Activated naive CD4-positive, alpha-beta T cell treated with anti-CD3 and anti-CD28 coated beads for 36 hours (primary cell): ENCODE measurements at regions of chr2 and their contacts with region 1.

Region 1: GRCh38 chr2:207311316-207312005 is 145.7 kb upstream of the KLF7 start:
- DNase-seq: peak; percentile 78
- H3K4me3 Mint-ChIP-seq: peak overlapping the region; percentile 13
- H3K27ac Mint-ChIP-seq: peak overlapping the region; percentile 78
- H3K4me1 Mint-ChIP-seq: peaks cover 22% of the 10 kb centered on the region
- H3K27me3 Mint-ChIP-seq: peaks cover 4% of the 10 kb centered on the region

Region 2: DNA sequence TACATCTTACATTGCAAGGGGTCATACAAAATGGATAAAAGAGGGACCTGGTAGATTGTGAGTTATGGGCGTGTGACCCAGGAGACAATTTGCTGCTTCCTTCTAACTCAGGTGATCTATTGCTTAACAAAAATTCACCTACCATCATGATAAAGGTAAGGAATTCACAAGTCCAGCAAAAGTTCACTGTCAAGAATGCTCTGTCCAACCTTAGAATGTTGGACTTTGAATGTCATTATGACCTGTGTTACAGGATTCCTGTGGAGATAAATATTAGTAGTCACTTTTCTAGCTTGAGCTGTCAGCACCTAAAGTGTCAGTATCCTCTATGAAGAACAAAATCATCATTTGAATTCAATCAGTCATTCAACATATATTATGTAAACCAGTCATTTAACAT is 137.8 kb before region 1 on chr2:
- CTCF ChIA-PET with region 1: no interaction called
- intact Hi-C with region 1: loop called (anchors 2 kb)
- DNase-seq: no peak
- H3K4me3 Mint-ChIP-seq: no peak overlapping the region
- H3K27ac Mint-ChIP-seq: no peak overlapping the region
- H3K4me1 Mint-ChIP-seq: peaks cover 14% of the 10 kb centered on the region
- H3K27me3 Mint-ChIP-seq: no peaks in the 10 kb centered on the region

Region 3: DNA sequence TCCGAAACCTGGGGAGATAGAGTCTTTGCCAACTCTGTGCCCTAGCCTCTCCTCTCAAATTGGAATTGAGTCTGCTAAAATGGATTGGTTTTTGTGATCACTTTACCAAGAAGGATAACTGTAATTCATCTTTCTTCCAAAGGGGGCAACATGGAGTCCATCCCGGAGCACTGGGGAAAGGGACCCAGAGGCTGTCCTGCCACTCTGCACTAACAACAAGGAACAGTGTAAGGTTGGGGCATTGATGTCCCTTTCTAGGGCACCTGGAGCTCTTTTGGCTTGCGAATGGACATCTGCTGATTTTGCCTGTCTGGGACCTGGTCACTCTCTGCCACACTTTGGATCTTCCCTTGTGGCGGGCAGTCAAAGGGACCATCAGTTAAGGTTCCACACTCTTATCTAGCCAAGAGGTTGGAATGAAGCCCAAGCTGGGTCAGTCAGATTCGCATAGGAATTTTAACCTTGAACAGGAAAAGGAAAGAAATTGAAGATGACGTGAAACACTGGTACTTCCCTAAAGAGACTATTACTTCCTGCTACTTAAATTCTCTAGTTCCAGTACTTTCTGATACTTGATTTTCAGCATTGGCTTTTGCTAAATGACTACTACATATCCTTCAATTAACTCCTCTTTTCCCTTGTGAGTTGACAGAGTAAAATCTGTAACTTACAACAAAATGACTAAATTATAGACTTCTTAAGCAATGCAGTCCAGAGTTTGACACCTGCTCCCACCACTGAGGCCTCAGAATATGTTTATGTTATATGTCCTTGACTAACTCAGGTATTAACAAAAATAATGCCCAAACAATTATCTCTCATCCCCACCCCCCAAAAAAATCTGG is 81.0 kb before region 1 on chr2:
- CTCF ChIA-PET with region 1: no interaction called
- intact Hi-C with region 1: loop called (anchors 1 kb)
- DNase-seq: no peak
- H3K4me3 Mint-ChIP-seq: no peak overlapping the region
- H3K27ac Mint-ChIP-seq: peak overlapping the region; percentile 86
- H3K4me1 Mint-ChIP-seq: peaks cover 53% of the 10 kb centered on the region
- H3K27me3 Mint-ChIP-seq: no peaks in the 10 kb centered on the region

Region 4: DNA sequence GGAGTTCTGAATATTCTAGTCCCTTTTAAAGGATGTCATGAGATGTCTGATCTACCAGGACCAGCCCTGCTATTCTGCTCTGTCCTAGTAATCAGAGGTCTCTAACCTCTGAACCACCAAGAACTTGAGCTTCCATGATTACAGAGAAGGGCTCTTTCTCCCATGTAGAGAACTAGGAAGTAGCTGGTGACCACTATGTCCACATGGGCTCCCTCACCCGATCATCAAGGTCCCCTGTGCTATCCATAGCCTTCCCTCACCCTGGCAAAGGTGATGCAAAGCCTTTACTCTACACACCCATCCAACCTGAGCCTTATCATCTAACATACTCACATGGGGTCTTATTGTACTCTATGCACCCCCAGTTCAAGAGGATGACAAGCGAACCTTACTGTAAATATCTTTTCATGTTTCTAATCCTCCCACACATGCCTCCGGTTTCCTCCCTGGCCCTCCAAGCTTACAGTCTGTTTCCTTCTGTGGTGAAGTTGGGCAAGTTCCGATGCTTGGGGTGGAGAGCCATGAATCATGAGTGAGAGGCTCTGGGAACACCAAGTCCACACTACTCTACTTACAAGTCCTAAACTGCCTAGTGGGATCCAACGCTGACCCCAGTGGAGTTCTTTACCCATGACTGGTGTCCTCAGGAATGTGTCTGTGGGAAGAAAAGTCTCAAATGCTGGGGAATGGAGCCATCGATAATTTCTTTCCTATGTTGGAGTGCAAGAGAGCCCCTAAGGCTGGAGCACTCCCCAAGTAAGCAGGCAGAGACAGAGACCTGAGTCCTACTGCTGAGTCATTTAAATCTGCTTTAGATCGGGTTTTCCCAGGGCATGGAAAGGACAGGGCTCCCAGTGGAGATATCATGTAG is 72.4 kb before region 1 on chr2:
- CTCF ChIA-PET with region 1: no interaction called
- intact Hi-C with region 1: loop called (anchors 1 kb)
- DNase-seq: peak; percentile 73
- H3K4me3 Mint-ChIP-seq: no peak overlapping the region
- H3K27ac Mint-ChIP-seq: peak overlapping the region; percentile 2
- H3K4me1 Mint-ChIP-seq: peaks cover 30% of the 10 kb centered on the region
- H3K27me3 Mint-ChIP-seq: no peaks in the 10 kb centered on the region

Region 5: DNA sequence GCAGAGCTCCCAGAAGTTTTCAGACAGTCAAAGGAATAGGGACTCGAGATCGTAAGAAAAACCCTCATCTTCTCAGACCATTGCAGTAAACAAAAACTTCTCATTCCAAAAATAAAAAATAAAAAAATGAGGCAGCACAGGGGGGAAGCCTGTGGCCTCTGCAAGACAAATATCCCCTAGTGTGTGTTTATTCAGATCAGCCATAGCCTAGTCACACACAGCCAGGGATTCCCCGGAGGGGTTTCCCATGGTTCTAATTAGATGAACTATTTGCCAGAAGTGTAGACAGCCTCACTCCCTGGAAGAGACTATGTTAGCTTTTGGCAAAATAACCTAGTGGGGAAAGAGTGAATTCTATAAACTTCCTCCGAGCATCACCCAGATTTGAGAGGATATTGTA is 22.8 kb before region 1 on chr2:
- CTCF ChIA-PET with region 1: no interaction called
- intact Hi-C with region 1: loop called (anchors 1 kb)
- DNase-seq: peak; percentile 84
- H3K4me3 Mint-ChIP-seq: no peak overlapping the region
- H3K27ac Mint-ChIP-seq: peak overlapping the region; percentile 33
- H3K4me1 Mint-ChIP-seq: peaks cover 73% of the 10 kb centered on the region
- H3K27me3 Mint-ChIP-seq: no peaks in the 10 kb centered on the region